Activated CD4-positive, alpha-beta T cell treated with anti-CD3 and anti-CD28 coated beads, Interleukin-2, amount 10 ng/mL, durations not matched to agents 24 days and 14 days (primary cell): ENCODE measurements at regions of chr11 and their contacts with region 1.

Region 1: GRCh38 chr11:69296890-69297786 is 3.2 kb downstream of the MYEOV start:
- DNase-seq: peak; percentile 94
- H3K4me3 Mint-ChIP-seq: peak overlapping the region; percentile 61
- H3K27ac Mint-ChIP-seq: peak overlapping the region; percentile 91
- H3K4me1 Mint-ChIP-seq: peaks cover 58% of the 10 kb centered on the region
- H3K27me3 Mint-ChIP-seq: peaks cover 2% of the 10 kb centered on the region

Region 2: DNA sequence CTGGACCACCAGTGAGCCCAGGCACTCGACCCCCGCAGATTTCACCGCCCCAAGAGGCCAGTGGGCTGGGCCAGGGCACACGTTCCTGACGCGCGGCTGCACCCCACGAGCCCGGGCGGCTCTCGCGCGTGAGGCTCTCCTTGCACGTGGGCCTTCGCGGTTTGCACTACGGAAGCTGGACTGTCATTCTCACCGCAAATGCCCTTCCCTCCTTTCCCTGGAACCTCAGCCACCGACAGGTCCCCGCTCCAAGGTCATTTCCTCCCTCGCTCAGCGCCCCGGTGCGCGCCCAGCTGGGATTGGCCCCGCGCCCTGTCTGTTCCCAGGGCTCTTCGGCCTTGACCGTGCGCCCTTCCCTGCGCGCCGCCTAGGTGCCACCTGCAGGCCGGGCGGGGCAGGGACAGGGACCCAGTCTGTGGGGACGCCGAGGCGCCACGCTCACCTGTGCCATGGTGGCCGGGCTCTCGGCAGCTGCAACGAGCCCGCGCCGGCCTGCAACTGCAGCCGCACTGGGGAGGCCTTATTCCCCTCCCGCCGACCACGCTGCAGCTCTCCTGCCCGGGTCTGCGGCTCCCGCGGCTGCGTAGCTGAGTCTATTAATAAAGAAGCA is 453.3 kb before region 1 on chr11:
- intact Hi-C with region 1: loop called (anchors 5 kb)
- DNase-seq: peak; percentile 90
- H3K4me3 Mint-ChIP-seq: peak overlapping the region; percentile 81
- H3K27ac Mint-ChIP-seq: peak overlapping the region; percentile 81
- H3K4me1 Mint-ChIP-seq: peaks cover 30% of the 10 kb centered on the region
- H3K27me3 Mint-ChIP-seq: peaks cover 15% of the 10 kb centered on the region

Region 3: GRCh38 chr11:69122642-69123431 is 174.3 kb before region 1 on chr11:
- intact Hi-C with region 1: loop called (anchors 1 kb)
- DNase-seq: peak; percentile 84
- H3K4me3 Mint-ChIP-seq: peak overlapping the region; percentile 74
- H3K27ac Mint-ChIP-seq: peak overlapping the region; percentile 86
- H3K4me1 Mint-ChIP-seq: peaks cover 27% of the 10 kb centered on the region
- H3K27me3 Mint-ChIP-seq: no peaks in the 10 kb centered on the region

Region 4: DNA sequence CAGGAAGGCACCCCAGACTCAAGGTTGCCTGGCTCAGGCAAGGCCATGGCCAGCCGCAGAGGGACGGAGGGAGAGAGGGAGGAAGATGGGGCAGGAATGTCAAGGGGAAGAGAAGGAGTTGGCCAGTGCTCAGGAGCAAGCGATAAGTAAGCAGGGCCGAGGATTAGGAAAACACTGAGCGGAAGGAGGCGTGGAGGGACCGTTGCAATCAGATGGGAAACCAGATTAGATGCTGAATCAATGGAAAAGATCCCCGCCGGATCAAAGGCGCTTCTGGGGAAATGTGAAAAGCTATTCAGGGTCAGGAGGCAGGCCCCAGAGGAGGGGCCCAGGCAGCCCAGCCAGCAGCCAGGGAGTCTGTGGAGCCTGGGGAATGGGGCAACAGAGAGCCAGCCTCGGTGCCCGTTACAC is 29.7 kb before region 1 on chr11:
- intact Hi-C with region 1: no loop called
- DNase-seq: no peak
- H3K4me3 Mint-ChIP-seq: no peak overlapping the region
- H3K27ac Mint-ChIP-seq: no peak overlapping the region
- H3K4me1 Mint-ChIP-seq: no peaks in the 10 kb centered on the region
- H3K27me3 Mint-ChIP-seq: peaks cover 2% of the 10 kb centered on the region

Region 5: DNA sequence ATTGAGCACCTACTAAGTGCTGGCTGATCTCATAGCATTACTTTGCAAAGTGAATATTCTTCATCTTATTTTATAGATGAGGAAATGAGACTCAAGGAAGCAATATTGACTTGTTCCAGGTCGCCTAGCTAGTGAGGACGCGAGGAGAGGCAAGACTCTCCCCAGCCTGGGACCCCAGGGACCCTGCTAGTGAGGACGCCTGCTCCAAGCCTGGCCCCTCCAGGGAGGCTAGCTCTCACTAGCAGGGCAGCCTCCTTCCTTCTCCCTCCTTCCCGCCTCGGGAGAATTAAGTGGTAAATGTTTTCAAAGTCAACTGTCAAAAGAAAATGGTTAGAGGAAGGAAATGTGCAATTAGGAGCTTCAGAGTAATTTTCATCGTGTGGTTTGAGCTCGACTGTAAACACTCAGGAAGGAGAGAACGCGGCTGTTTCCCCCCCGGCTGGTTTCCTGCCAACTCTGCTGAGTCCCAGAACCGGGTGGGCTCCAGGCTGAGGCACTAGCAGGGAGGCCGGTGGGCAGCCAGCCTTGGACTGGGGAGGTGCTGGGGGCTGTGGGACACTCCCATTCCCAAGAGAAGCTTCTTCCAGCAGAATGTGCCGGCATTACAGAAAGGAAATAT is 14.7 kb after region 1 on chr11:
- intact Hi-C with region 1: loop called (anchors 1 kb)
- DNase-seq: peak; percentile 75
- H3K4me3 Mint-ChIP-seq: peak overlapping the region; percentile 54
- H3K27ac Mint-ChIP-seq: peak overlapping the region; percentile 83
- H3K4me1 Mint-ChIP-seq: peaks cover 36% of the 10 kb centered on the region
- H3K27me3 Mint-ChIP-seq: no peaks in the 10 kb centered on the region

Region 6: GRCh38 chr11:69352715-69353325 is 55.7 kb after region 1 on chr11:
- intact Hi-C with region 1: loop called (anchors 5 kb)
- DNase-seq: peak; percentile 59
- H3K4me3 Mint-ChIP-seq: no peak overlapping the region
- H3K27ac Mint-ChIP-seq: peak overlapping the region; percentile 11
- H3K4me1 Mint-ChIP-seq: peaks cover 14% of the 10 kb centered on the region
- H3K27me3 Mint-ChIP-seq: peaks cover 5% of the 10 kb centered on the region

Region 7: DNA sequence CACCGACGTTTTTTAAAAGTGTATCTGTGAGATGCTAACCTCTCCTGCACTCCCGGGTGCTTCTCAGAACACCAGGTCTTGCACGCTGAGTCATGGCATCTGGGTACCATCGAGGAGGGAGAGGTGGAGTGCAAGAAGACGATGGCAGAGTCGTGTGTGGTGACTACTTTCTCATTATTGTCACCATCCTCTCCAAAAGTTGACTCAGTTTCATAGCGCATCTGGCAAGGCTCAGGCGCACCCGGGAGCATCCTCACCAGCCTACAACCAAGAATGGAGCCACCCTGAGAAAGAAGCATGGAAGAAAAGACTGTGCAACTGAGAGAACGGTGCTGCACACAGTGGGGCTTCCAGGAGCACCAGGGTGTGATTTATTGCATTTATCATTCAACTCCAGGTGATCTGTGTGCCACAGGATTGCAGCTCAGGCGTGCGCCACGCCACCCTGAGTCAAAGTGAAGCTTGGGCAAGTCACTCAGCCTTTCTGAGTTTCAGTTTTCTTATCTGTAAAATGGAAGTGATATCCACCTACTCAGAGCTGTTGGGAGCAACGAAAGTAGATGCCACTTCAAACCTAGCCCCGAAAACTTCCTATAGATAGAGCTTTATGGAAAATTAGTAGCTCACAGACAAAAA is 249.7 kb after region 1 on chr11:
- intact Hi-C with region 1: loop called (anchors 2 kb)
- DNase-seq: peak; percentile 66
- H3K4me3 Mint-ChIP-seq: peak overlapping the region; percentile 29
- H3K27ac Mint-ChIP-seq: peak overlapping the region; percentile 41
- H3K4me1 Mint-ChIP-seq: peaks cover 10% of the 10 kb centered on the region
- H3K27me3 Mint-ChIP-seq: peaks cover 23% of the 10 kb centered on the region

Region 8: DNA sequence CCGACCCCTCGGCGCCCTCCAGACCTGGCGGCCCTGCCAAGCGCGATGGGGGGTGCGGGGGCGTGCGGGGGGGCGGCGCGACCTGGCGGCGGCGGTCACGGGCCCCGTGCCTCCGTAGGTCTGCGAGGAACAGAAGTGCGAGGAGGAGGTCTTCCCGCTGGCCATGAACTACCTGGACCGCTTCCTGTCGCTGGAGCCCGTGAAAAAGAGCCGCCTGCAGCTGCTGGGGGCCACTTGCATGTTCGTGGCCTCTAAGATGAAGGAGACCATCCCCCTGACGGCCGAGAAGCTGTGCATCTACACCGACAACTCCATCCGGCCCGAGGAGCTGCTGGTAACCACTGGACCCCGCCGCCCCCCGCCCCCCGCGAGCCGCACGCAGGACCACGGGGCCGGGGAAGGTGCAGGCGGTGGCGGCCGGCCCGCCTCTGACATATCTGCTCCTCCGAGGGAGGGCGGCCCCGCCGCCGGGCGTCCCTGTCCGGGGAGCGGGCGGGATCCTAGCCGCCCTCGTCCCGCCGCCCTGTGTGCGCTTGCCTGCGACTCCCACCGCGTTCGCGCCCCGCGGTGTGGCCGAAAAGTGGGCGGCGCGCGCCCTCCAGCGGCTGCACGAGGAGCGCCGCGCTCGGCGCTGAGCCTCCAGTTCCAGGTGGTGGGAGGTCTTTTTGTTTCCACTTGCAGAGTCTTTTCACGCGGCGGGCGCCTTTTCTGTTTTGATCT is 345.9 kb after region 1 on chr11:
- intact Hi-C with region 1: loop called (anchors 1 kb)
- DNase-seq: peak; percentile 93
- H3K4me3 Mint-ChIP-seq: peak overlapping the region; percentile 70
- H3K27ac Mint-ChIP-seq: no peak overlapping the region
- H3K4me1 Mint-ChIP-seq: peaks cover 3% of the 10 kb centered on the region
- H3K27me3 Mint-ChIP-seq: peaks cover 27% of the 10 kb centered on the region